CD8-positive, alpha-beta T cell (primary cell): ENCODE measurements at regions of chr1 and their contacts with region 1.

Region 1: DNA sequence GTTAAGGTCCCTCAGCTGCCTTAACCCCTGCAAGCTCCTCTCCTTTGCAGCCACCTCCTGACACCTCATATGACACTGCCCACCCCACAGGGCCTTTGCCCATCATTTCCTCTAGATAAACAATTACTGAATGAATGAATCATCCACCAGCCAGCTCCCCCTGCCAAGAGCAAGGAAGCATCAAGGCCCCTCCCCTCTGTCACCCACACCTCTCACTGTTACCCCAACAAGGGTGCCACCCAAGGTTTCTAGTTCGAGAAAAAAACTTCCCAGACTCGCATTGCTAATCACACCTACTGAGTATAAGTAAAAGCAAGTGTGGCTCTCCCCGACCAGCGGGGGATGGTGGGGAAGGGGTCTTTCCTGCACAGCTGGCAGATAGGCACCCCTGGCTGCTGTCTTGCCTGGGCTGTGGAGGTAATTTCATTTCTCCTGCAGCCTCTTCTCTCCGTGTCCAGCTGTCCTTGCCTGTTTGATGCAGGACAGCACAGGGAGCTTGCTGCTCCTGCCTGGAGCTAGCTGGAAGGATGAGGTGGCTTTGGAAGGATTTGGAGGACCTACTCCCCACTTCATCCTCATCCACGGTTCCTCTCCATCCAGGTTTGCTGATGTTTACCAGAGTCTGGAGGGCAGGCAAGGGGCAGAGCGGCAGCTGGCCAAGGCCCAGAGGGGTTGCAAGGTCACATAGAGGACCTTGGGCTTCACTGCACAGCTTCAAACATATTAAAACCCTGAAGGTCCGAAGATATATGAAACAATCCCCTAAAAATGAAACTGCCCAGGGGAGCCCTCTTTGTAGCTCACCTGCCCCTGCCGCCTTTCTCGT is 33.1 kb upstream of the LBR start:
- DNase-seq: peak; percentile 26 to 91 (median 64)
- ATAC-seq: peak; percentile 94
- H3K4me3 ChIP-seq: peak overlapping the region in 1 of 2 experiments; percentile 28
- H3K4me3 Mint-ChIP-seq: no peak overlapping the region
- H3K27ac ChIP-seq: peak overlapping the region; percentile 16 to 70
- H3K27ac Mint-ChIP-seq: peak overlapping the region; percentile 80
- H3K4me1 ChIP-seq: peaks cover 31% of the 10 kb centered on the region
- H3K4me1 Mint-ChIP-seq: peaks cover 39% of the 10 kb centered on the region
- H3K27me3 ChIP-seq: no peaks in the 10 kb centered on the region
- H3K27me3 Mint-ChIP-seq: no peaks in the 10 kb centered on the region
- CTCF ChIP-seq: no peak

Region 2: GRCh38 chr1:225441314-225442122 is 19.4 kb before region 1 on chr1:
- CTCF ChIA-PET with region 1: interaction called, 20 read pairs
- POLR2A ChIA-PET with region 1: interaction called, 19 read pairs
- intact Hi-C with region 1: no loop called
- DNase-seq: no peak
- ATAC-seq: no peak
- H3K4me3 ChIP-seq: peak overlapping the region in 1 of 2 experiments; percentile 14
- H3K4me3 Mint-ChIP-seq: peak overlapping the region; percentile 61
- H3K27ac ChIP-seq: peak overlapping the region in 1 of 2 experiments; percentile 51
- H3K27ac Mint-ChIP-seq: peak overlapping the region; percentile 79
- H3K4me1 ChIP-seq: peaks cover 51% of the 10 kb centered on the region
- H3K4me1 Mint-ChIP-seq: peaks cover 53% of the 10 kb centered on the region
- H3K27me3 ChIP-seq: no peaks in the 10 kb centered on the region
- H3K27me3 Mint-ChIP-seq: no peaks in the 10 kb centered on the region
- CTCF ChIP-seq: no peak